AG04450 (cell line): ENCODE measurements at regions of chr3 and their contacts with region 1.

Region 1: GRCh38 chr3:153260687-153261086 is 98.7 kb downstream of the RAP2B start:
- DNase-seq: no peak
- H3K4me3 ChIP-seq: no peak overlapping the region
- H3K27ac ChIP-seq: no peak overlapping the region
- H3K27me3 ChIP-seq: no peaks in the 10 kb centered on the region
- CTCF ChIP-seq: no peak

Region 2: DNA sequence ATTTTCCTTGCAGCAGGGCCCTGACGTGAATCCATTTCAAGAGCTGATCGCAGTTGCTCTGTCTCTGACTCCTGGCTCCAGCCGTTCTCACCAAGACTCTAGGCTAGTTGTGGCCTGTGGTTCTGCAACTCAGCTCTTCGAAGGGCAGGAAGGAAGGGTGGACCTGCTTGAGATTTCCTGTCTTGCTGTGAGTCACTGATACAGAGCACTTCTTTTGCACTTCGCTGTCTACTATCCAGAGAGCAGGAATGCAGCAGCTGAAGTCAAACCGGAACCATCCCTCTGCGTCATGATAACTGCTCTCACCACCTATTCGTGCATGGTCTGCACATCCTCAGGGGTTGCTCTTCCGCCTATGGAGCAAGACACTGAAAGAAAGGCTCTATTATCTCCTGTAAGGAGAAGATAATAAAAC is 38.9 kb before region 1 on chr3:
- CTCF ChIA-PET with region 1: interaction called, 10 read pairs
- POLR2A ChIA-PET with region 1: no interaction called
- DNase-seq: peak; percentile 88
- H3K4me3 ChIP-seq: no peak overlapping the region
- H3K27ac ChIP-seq: peak overlapping the region; percentile 69
- H3K27me3 ChIP-seq: no peaks in the 10 kb centered on the region
- CTCF ChIP-seq: no peak